CD4-positive, alpha-beta memory T cell (primary cell): ENCODE measurements at regions of chr20 and their contacts with region 1.

Region 1: GRCh38 chr20:13119583-13119982 is 101.5 kb upstream of the ISM1 start:
- DNase-seq: peak; percentile 38 to 65 (median 63)
- H3K4me3 ChIP-seq: no peak overlapping the region
- H3K4me3 Mint-ChIP-seq: no peak overlapping the region
- H3K27ac ChIP-seq: no peak overlapping the region
- H3K27ac Mint-ChIP-seq: peak overlapping the region in 1 of 7 donors; percentile 7
- H3K4me1 ChIP-seq: no peaks in the 10 kb centered on the region
- H3K4me1 Mint-ChIP-seq: peaks cover 0 to 2% (median 0%) of the 10 kb centered on the region in 4 donors
- H3K27me3 ChIP-seq: no peaks in the 10 kb centered on the region
- H3K27me3 Mint-ChIP-seq: peaks cover 0 to 2% of the 10 kb centered on the region in 2 donors

Region 2: DNA sequence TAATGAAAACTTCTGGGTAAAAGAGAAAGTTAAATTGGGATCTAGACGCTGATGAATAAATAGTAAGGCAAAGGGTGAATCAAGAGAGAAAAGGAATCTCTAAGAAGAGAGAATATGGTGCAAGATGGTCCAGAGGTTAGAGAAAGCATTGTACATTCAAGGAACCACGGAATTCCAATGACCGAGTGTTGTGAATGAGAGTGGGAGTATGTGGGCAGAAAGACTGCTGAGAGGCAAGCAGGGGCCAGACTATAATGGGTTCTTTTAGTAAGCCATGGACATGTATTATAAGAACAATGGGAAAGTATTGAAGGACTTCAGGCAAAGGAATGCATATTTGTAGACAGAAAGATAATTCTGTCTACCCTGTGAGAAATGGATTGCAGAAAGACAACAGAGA is 65.6 kb before region 1 on chr20:
- CTCF ChIA-PET with region 1: no interaction called
- POLR2A ChIA-PET with region 1: no interaction called
- intact Hi-C with region 1: no loop called
- DNase-seq: no peak
- H3K4me3 ChIP-seq: no peak overlapping the region
- H3K4me3 Mint-ChIP-seq: no peak overlapping the region
- H3K27ac ChIP-seq: no peak overlapping the region
- H3K27ac Mint-ChIP-seq: no peak overlapping the region
- H3K4me1 ChIP-seq: no peaks in the 10 kb centered on the region
- H3K4me1 Mint-ChIP-seq: no peaks in the 10 kb centered on the region
- H3K27me3 ChIP-seq: no peaks in the 10 kb centered on the region
- H3K27me3 Mint-ChIP-seq: no peaks in the 10 kb centered on the region

Region 3: GRCh38 chr20:13105864-13106457 is 13.6 kb before region 1 on chr20:
- CTCF ChIA-PET with region 1: interaction called, 12 read pairs
- POLR2A ChIA-PET with region 1: no interaction called
- intact Hi-C with region 1: no loop called
- DNase-seq: peak in 3 of 5 donors; percentile 10 to 20 (median 14)
- H3K4me3 ChIP-seq: no peak overlapping the region
- H3K4me3 Mint-ChIP-seq: no peak overlapping the region
- H3K27ac ChIP-seq: no peak overlapping the region
- H3K27ac Mint-ChIP-seq: no peak overlapping the region
- H3K4me1 ChIP-seq: no peaks in the 10 kb centered on the region
- H3K4me1 Mint-ChIP-seq: no peaks in the 10 kb centered on the region
- H3K27me3 ChIP-seq: no peaks in the 10 kb centered on the region
- H3K27me3 Mint-ChIP-seq: peaks cover 2 to 8% of the 10 kb centered on the region in 2 donors

Region 4: DNA sequence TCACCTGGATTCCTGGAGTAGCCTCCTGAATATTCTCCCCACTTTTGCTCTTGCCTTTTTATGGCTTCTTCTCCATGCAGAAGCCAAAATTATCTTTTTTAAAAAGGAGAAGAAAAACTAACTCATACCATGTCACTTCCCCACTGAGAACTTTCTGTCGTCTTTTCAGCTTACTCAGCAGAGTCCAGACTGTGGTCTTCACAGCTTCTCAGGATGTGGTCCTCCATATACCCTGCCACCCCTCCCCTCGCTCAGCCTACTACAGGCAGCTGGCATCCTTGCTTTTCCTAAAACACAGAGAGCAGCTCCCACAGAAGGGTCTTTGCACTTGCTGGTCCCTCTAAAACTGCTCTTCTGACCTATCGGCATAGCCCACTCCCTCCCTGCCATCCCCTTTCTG is 12.1 kb after region 1 on chr20:
- CTCF ChIA-PET with region 1: interaction called, 12 read pairs
- POLR2A ChIA-PET with region 1: no interaction called
- intact Hi-C with region 1: no loop called
- DNase-seq: no peak
- H3K4me3 ChIP-seq: no peak overlapping the region
- H3K4me3 Mint-ChIP-seq: no peak overlapping the region
- H3K27ac ChIP-seq: no peak overlapping the region
- H3K27ac Mint-ChIP-seq: no peak overlapping the region
- H3K4me1 ChIP-seq: no peaks in the 10 kb centered on the region
- H3K4me1 Mint-ChIP-seq: peaks cover 0 to 4% (median 0%) of the 10 kb centered on the region in 4 donors
- H3K27me3 ChIP-seq: no peaks in the 10 kb centered on the region
- H3K27me3 Mint-ChIP-seq: peaks cover 4 to 11% of the 10 kb centered on the region in 2 donors

Region 5: DNA sequence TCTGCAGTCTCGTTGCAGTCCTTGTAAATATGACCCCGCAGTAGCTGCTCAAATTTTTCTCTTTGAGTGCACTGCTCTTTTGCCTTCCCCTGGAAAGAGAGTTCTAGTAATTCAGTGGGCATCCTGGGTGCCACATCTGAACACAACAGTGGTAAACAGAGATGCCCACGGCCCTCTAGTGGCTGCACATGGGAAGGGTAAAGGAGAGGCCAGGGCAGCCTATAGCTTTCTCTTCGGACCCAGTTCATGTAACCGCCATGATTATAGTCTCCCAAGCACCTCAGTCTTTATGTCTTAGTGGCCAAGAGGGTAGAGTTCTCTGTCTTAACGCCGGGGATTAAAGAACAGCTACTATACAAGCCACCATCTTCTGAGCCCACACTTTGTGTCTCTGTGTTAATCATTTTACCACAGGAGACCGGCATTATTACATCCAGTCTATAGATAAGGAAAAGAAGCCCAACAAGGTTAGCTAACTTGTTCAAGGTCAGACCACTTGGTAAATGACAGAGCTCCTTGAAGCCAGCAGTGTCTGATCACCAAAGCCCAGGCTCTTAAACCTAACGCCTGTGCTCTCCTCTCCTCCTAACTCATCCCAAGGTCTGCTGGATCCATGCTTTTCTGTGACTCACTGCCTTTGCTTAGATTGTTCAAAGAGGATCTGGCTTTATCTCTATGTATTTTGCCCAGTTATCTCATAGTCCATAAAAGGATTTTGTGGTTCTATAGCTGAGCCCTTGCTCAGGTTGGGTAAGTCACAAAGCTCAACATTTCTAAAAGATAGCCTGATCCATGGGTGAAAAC is 183.3 kb after region 1 on chr20:
- CTCF ChIA-PET with region 1: interaction called, 54 read pairs
- POLR2A ChIA-PET with region 1: no interaction called
- intact Hi-C with region 1: no loop called
- DNase-seq: peak; percentile 22 to 49 (median 24)
- H3K4me3 ChIP-seq: no peak overlapping the region
- H3K4me3 Mint-ChIP-seq: no peak overlapping the region
- H3K27ac ChIP-seq: no peak overlapping the region
- H3K27ac Mint-ChIP-seq: no peak overlapping the region
- H3K4me1 ChIP-seq: no peaks in the 10 kb centered on the region
- H3K4me1 Mint-ChIP-seq: no peaks in the 10 kb centered on the region
- H3K27me3 ChIP-seq: no peaks in the 10 kb centered on the region
- H3K27me3 Mint-ChIP-seq: peaks cover 0 to 2% of the 10 kb centered on the region in 2 donors

Region 6: DNA sequence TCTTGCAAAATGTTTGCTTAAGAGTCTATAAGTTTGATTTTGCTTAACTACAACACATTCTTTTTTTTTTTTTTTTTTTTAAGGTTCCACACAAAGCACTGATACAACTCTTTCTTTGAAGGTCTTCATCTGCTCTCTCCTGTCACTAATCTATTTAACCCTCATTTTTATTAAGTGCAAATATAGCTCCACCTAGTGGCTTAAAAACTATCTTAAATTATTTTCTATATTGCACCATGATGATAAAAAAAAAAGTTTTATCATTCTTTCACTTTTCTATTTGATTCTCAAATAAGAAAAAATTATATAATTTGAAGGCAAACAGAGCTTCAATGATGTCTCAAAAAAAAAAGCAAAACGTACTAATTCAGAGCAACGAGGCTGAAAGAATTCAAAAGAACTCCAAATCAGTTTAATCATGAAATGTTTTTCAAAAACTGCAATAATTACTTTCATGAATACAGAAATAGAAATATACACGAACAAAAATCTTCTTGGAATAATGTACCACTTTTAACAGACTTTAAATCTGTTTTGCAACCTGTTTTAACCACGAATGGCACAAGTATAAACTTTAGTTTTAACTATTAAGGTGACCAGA is 652.4 kb after region 1 on chr20:
- CTCF ChIA-PET with region 1: interaction called, 8 read pairs
- POLR2A ChIA-PET with region 1: no interaction called
- intact Hi-C with region 1: loop called (anchors 1 kb)
- DNase-seq: peak in 4 of 5 donors; percentile 9 to 31 (median 26)
- H3K4me3 ChIP-seq: no peak overlapping the region
- H3K4me3 Mint-ChIP-seq: no peak overlapping the region
- H3K27ac ChIP-seq: no peak overlapping the region
- H3K27ac Mint-ChIP-seq: peak overlapping the region in 2 of 7 donors; percentile 29 to 30
- H3K4me1 ChIP-seq: peaks cover 2% of the 10 kb centered on the region
- H3K4me1 Mint-ChIP-seq: peaks cover 5 to 10% (median 7%) of the 10 kb centered on the region in 4 donors
- H3K27me3 ChIP-seq: no peaks in the 10 kb centered on the region
- H3K27me3 Mint-ChIP-seq: no peaks in the 10 kb centered on the region